ENCODE measurements at regions of chr20 and their contacts with region 1.

Region 1: GRCh38 chr20:21719592-21720214 is 14.2 kb downstream of the PAX1 start:
- DNase-seq: peak; percentile 60
- H3K4me3 ChIP-seq: no peak overlapping the region
- H3K27ac ChIP-seq: no peak overlapping the region
- H3K4me1 ChIP-seq: no peaks in the 10 kb centered on the region
- CTCF ChIP-seq: peak; percentile 97

Region 2: GRCh38 chr20:21656308-21657073 is 63.2 kb before region 1 on chr20:
- CTCF ChIA-PET with region 1: no interaction called
- POLR2A ChIA-PET with region 1: no interaction called
- intact Hi-C with region 1: no loop called
- DNase-seq: no peak
- H3K4me3 ChIP-seq: no peak overlapping the region
- H3K27ac ChIP-seq: no peak overlapping the region
- H3K4me1 ChIP-seq: no peaks in the 10 kb centered on the region
- CTCF ChIP-seq: no peak

Region 3: GRCh38 chr20:21704408-21705385 is 15.0 kb before region 1 on chr20:
- CTCF ChIA-PET with region 1: no interaction called
- POLR2A ChIA-PET with region 1: no interaction called
- intact Hi-C with region 1: no loop called
- DNase-seq: no peak
- H3K4me3 ChIP-seq: no peak overlapping the region
- H3K27ac ChIP-seq: no peak overlapping the region
- H3K4me1 ChIP-seq: no peaks in the 10 kb centered on the region
- CTCF ChIP-seq: no peak

Region 4: DNA sequence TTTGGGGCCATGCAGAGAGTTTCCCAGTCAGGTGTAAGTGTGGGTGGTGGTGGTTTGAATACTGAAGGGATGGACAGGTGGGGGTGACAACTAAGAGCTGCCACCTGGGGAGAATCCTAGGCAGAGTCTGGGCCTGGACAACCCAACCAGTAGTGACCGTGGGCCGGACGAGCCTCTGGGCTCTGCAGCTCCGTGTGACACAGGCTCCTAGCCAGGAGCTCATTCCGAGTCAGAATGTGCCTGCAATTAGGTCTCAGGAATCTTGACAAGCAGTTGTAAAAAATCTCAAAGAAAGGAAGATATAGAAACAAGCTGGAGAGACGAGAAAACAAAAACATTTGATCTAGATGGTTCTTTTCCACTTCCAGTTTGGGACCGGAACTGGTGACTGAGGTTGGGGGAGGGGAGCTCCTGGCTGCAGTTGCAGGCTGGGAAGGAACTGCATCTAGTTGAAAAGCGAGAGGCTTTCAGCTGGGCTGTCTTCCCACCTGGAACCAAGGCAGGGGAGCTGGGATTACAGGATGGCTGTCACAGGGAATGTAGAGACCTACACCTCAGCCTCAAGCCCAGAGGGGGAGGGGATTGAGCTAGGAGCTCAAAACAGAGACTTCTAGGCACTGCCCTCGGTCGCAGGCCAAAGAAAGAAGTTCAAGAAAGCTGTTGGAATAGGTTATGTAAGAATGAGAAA is 142.7 kb after region 1 on chr20:
- CTCF ChIA-PET with region 1: no interaction called
- POLR2A ChIA-PET with region 1: no interaction called
- intact Hi-C with region 1: no loop called
- DNase-seq: no peak
- H3K4me3 ChIP-seq: no peak overlapping the region
- H3K27ac ChIP-seq: no peak overlapping the region
- H3K4me1 ChIP-seq: no peaks in the 10 kb centered on the region
- CTCF ChIP-seq: no peak

Region 5: DNA sequence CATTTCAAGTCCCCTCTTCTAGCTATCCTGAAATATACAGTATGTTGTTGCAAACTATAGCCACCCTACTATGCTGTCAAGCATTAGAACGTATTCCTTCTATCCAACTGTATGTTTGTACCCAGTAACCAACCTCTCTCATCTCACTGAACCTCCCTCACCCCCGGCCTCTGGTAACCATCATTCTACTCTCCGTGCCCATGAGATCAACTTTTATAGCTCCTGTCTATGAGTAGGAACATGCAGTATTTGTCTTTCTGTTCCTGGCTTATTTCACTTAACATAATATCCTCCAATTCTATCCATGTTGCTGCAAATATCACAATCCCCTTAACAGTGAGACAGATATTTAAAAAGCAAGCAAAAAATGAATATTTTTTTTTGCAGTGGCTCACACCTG is 182.7 kb after region 1 on chr20:
- CTCF ChIA-PET with region 1: no interaction called
- POLR2A ChIA-PET with region 1: no interaction called
- intact Hi-C with region 1: no loop called
- DNase-seq: no peak
- H3K4me3 ChIP-seq: no peak overlapping the region
- H3K27ac ChIP-seq: no peak overlapping the region
- H3K4me1 ChIP-seq: no peaks in the 10 kb centered on the region
- CTCF ChIP-seq: no peak

Region 6: GRCh38 chr20:22098511-22098910 is 378.8 kb after region 1 on chr20:
- CTCF ChIA-PET with region 1: no interaction called
- POLR2A ChIA-PET with region 1: interaction called, 3 read pairs
- intact Hi-C with region 1: loop called (anchors 5 kb)
- DNase-seq: no peak
- H3K4me3 ChIP-seq: no peak overlapping the region
- H3K27ac ChIP-seq: no peak overlapping the region
- H3K4me1 ChIP-seq: no peaks in the 10 kb centered on the region
- CTCF ChIP-seq: no peak

Region 7: GRCh38 chr20:22248051-22248667 is 528.5 kb after region 1 on chr20:
- CTCF ChIA-PET with region 1: no interaction called
- POLR2A ChIA-PET with region 1: no interaction called
- intact Hi-C with region 1: loop called (anchors 10 kb)
- DNase-seq: peak; percentile 16
- H3K4me3 ChIP-seq: no peak overlapping the region
- H3K27ac ChIP-seq: no peak overlapping the region
- H3K4me1 ChIP-seq: no peaks in the 10 kb centered on the region
- CTCF ChIP-seq: peak; percentile 83